ENCODE measurements at regions of chr11 and their contacts with region 1.

Region 1: GRCh38 chr11:73982969-73983740 is 512 bp upstream of the UCP2 start:
- H3K4me3 ChIP-seq: peak overlapping the region; percentile 62
- H3K27ac ChIP-seq: peak overlapping the region; percentile 92
- H3K4me1 ChIP-seq: peaks cover 3% of the 10 kb centered on the region; the same call in 1 of the 2 replicates
- CTCF ChIP-seq: no peak

Region 2: GRCh38 chr11:73939096-73939495 is 44.1 kb before region 1 on chr11:
- CTCF ChIA-PET with region 1: no interaction called
- POLR2A ChIA-PET with region 1: no interaction called
- H3K4me3 ChIP-seq: no peak overlapping the region
- H3K27ac ChIP-seq: no peak overlapping the region
- H3K4me1 ChIP-seq: no peaks in the 10 kb centered on the region
- CTCF ChIP-seq: no peak

Region 3: GRCh38 chr11:73969991-73970800 is 13.0 kb before region 1 on chr11:
- CTCF ChIA-PET with region 1: interaction called, 4 read pairs
- POLR2A ChIA-PET with region 1: interaction called, 12 read pairs
- H3K4me3 ChIP-seq: no peak overlapping the region
- H3K27ac ChIP-seq: no peak overlapping the region
- H3K4me1 ChIP-seq: no peaks in the 10 kb centered on the region
- CTCF ChIP-seq: no peak

Region 4: DNA sequence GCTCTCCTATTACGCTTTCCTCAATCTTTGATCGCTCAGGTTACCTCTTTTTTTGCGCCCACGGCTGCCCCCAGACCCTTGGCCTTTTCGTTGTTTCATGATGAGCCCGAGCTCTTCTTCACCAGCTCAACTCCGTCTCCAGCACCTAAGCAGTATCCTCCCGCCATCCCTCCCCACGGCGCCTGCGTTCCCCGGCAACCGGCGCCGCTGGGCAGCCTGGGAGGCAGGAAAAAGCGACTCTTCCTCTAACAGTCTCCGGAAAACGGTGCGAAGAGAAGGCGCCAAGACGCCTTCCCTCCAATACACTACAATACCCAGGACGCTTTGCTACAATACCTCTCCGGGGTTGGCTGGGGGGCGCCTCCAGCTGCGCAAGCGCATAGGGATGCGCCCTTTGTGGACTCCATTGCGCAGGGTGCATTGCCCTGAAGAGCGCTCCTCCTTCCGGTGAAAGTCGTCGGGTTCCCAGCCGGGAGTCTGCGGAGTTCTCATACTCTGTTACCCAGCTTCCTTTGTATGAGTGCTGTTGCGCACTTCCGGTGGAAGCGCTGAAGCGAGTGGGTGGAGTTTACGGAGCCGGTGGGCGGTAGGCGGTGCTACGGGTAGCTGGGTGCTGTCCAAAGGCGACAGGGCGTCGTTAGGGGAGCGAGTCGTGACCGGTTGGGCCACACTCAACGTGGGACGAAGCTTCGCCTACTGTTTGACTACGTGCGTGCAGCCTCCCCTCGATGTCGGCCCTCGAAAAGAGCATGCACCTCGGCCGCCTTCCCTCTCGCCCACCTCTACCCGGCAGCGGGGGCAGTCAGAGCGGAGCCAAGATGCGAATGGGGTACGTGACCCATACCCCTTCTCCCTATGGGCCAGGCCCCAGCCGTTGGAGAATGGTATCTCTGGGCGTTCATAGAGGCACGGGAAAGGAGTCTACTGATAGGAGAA is 187.8 kb after region 1 on chr11 and contains the starts of genes C2CD3 and PPME1:
- CTCF ChIA-PET with region 1: no interaction called
- POLR2A ChIA-PET with region 1: interaction called, 12 read pairs
- H3K4me3 ChIP-seq: peak within 1 kb of the TSS; percentile 97
- H3K27ac ChIP-seq: peak within 1 kb of the TSS; percentile 63
- H3K4me1 ChIP-seq: no peaks in the 10 kb centered on the region
- CTCF ChIP-seq: peak; percentile 25; the same call in 1 of the 2 replicates

Measured in HEK293 (cell line).